ENCODE measurements at regions of chr9 and their contacts with region 1.

Region 1: DNA sequence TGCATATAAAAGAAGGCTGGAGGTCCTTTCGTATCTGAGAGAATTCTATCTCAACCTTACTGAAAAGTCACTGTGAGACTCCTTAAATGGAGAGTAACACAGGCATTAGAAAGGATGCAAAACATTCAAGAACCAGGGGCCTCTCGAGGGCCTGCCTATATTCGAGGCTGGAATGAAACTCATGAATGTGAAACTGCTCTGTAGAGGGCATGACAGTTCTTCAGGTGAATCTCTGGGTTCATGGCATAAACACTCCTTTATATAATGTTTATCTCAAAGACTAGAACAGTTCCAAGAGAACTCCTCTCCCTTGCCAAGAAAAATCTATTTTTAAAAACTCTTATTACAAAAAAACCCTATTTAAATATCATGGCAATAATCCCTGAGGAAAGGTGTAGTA is 113.9 kb downstream of the SEC61B start:
- DNase-seq: no peak
- ATAC-seq: no peak
- H3K4me3 ChIP-seq: no peak overlapping the region
- H3K4me3 Mint-ChIP-seq: no peak overlapping the region
- H3K27ac ChIP-seq: no peak overlapping the region
- H3K27ac Mint-ChIP-seq: no peak overlapping the region
- H3K4me1 ChIP-seq: no peaks in the 10 kb centered on the region
- H3K4me1 Mint-ChIP-seq: no peaks in the 10 kb centered on the region
- H3K27me3 ChIP-seq: no peaks in the 10 kb centered on the region
- H3K27me3 Mint-ChIP-seq: peaks cover 0 to 16% (median 8%) of the 10 kb centered on the region in 5 donors

Region 2: GRCh38 chr9:99286536-99286935 is 49.5 kb before region 1 on chr9:
- CTCF ChIA-PET with region 1: no interaction called
- POLR2A ChIA-PET with region 1: no interaction called
- intact Hi-C with region 1: no loop called
- DNase-seq: no peak
- ATAC-seq: no peak
- H3K4me3 ChIP-seq: no peak overlapping the region
- H3K4me3 Mint-ChIP-seq: no peak overlapping the region
- H3K27ac ChIP-seq: no peak overlapping the region
- H3K27ac Mint-ChIP-seq: no peak overlapping the region
- H3K4me1 ChIP-seq: no peaks in the 10 kb centered on the region
- H3K4me1 Mint-ChIP-seq: peaks cover 0 to 3% (median 0%) of the 10 kb centered on the region in 7 donors
- H3K27me3 ChIP-seq: peaks cover 0 to 4% of the 10 kb centered on the region in 2 donors
- H3K27me3 Mint-ChIP-seq: peaks cover 8 to 40% (median 30%) of the 10 kb centered on the region in 5 donors

Region 3: GRCh38 chr9:100573655-100574260 is 1237.8 kb after region 1 on chr9:
- CTCF ChIA-PET with region 1: no interaction called
- POLR2A ChIA-PET with region 1: no interaction called
- intact Hi-C with region 1: loop called in 1 of 2 experiments (anchors 5 kb)
- DNase-seq: no peak
- ATAC-seq: no peak
- H3K4me3 ChIP-seq: no peak overlapping the region
- H3K4me3 Mint-ChIP-seq: no peak overlapping the region
- H3K27ac ChIP-seq: no peak overlapping the region
- H3K27ac Mint-ChIP-seq: no peak overlapping the region
- H3K4me1 ChIP-seq: no peaks in the 10 kb centered on the region
- H3K4me1 Mint-ChIP-seq: no peaks in the 10 kb centered on the region
- H3K27me3 ChIP-seq: no peaks in the 10 kb centered on the region
- H3K27me3 Mint-ChIP-seq: peaks cover 0 to 3% (median 0%) of the 10 kb centered on the region in 5 donors

Measured in naive thymus-derived CD4-positive, alpha-beta T cell (primary cell).